Posterior vena cava (tissue), 2 donors: ENCODE measurements at regions of chr6 and their contacts with region 1.

Region 1: GRCh38 chr6:24052616-24052961 is 73.4 kb upstream of the NRSN1 start:
- DNase-seq: no peak

Region 2: GRCh38 chr6:23969344-23969743 is 83.2 kb before region 1 on chr6:
- intact Hi-C with region 1: no loop called
- DNase-seq: no peak

Region 3: GRCh38 chr6:24016857-24017256 is 35.7 kb before region 1 on chr6:
- intact Hi-C with region 1: loop called in 1 of 2 experiments (anchors 1 kb)
- DNase-seq: no peak